Right ventricle myocardium inferior (tissue), 1 donor: ENCODE measurements at regions of chr12 and their contacts with region 1.

Region 1: GRCh38 chr12:57632694-57633477 is at the start of gene B4GALNT1:
- DNase-seq: peak; percentile 86
- ATAC-seq: peak; percentile 90
- total RNA-seq, gene B4GALNT1: 7.3 TPM

Region 2: GRCh38 chr12:57583008-57583831 is 49.7 kb before region 1 on chr12:
- intact Hi-C with region 1: loop called (anchors 1 kb)
- DNase-seq: no peak
- ATAC-seq: peak; percentile 95

Region 3: GRCh38 chr12:57965766-57966165 is 332.9 kb after region 1 on chr12:
- intact Hi-C with region 1: no loop called
- DNase-seq: no peak
- ATAC-seq: no peak